Mammary epithelial cell (primary cell): ENCODE measurements at regions of chr7 and their contacts with region 1.

Region 1: GRCh38 chr7:119219663-119220062 is 995.2 kb downstream of the ANKRD7 start:
- DNase-seq: no peak
- H3K4me3 ChIP-seq: no peak overlapping the region
- H3K27ac ChIP-seq: no peak overlapping the region
- H3K4me1 ChIP-seq: no peaks in the 10 kb centered on the region
- H3K27me3 ChIP-seq: no peaks in the 10 kb centered on the region
- CTCF ChIP-seq: no peak

Region 2: DNA sequence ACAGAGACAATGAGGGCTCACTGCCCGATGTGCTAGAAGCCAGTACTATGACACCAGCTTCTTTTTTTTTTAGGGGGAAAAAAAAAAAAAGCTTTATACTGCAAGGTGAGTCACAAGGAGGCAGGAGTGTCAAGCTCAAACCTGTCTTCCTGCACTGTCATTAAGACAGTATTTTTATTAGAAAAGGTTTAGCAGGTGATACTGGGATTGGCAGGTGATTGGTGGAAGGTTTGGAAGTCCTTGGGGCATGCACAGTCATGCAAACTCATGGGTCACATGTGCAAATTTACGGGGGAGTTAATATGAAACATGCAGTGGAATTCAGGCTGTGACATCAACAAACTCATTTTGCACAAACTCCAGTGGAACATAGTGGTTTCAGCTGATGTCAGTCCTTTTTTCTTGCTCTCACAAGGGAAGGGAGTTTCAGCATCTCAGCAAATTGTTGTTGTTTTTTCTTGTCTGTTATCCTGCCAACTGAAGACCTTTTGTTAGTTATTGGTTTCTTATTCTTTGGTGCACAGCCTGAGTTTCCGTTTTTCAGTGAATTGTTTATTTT is 464.5 kb before region 1 on chr7:
- CTCF ChIA-PET with region 1: interaction called, 12 read pairs
- dilution Hi-C with region 1: no loop called
- in situ Hi-C with region 1: no loop called
- intact Hi-C with region 1: no loop called
- DNase-seq: peak; percentile 99
- H3K4me3 ChIP-seq: no peak overlapping the region
- H3K27ac ChIP-seq: peak overlapping the region; percentile 88
- H3K4me1 ChIP-seq: peaks cover 7% of the 10 kb centered on the region
- H3K27me3 ChIP-seq: no peaks in the 10 kb centered on the region
- CTCF ChIP-seq: no peak